Aorta (tissue), 5 donors: ENCODE measurements at regions of chr11 and their contacts with region 1.

Region 1: GRCh38 chr11:14974515-14975251 is 2.5 kb upstream of the CALCA start:
- DNase-seq: peak; percentile 62 to 81
- ATAC-seq: no peak
- H3K4me3 ChIP-seq: peak overlapping the region; percentile 10 to 16
- H3K27ac ChIP-seq: no peak overlapping the region
- H3K4me1 ChIP-seq: no peaks in the 10 kb centered on the region
- H3K27me3 ChIP-seq: peaks cover 0 to 1% of the 10 kb centered on the region in 2 donors

Region 2: GRCh38 chr11:15027011-15027410 is 52.3 kb after region 1 on chr11:
- intact Hi-C with region 1: loop called in 1 of 2 experiments (anchors 10 kb)
- DNase-seq: no peak
- ATAC-seq: no peak
- H3K4me3 ChIP-seq: no peak overlapping the region
- H3K27ac ChIP-seq: no peak overlapping the region
- H3K4me1 ChIP-seq: no peaks in the 10 kb centered on the region
- H3K27me3 ChIP-seq: no peaks in the 10 kb centered on the region

Region 3: GRCh38 chr11:15074206-15075161 is 99.8 kb after region 1 on chr11:
- intact Hi-C with region 1: loop called (anchors 2 kb)
- DNase-seq: peak; percentile 88 to 96
- ATAC-seq: peak; percentile 83
- H3K4me3 ChIP-seq: no peak overlapping the region
- H3K27ac ChIP-seq: no peak overlapping the region
- H3K4me1 ChIP-seq: no peaks in the 10 kb centered on the region
- H3K27me3 ChIP-seq: no peaks in the 10 kb centered on the region

Region 4: GRCh38 chr11:15199693-15200092 is 225.0 kb after region 1 on chr11:
- intact Hi-C with region 1: loop called (anchors 5 to 10 kb)
- DNase-seq: peak; percentile 75 to 84
- ATAC-seq: peak; percentile 51
- H3K4me3 ChIP-seq: no peak overlapping the region
- H3K27ac ChIP-seq: peak overlapping the region in 1 of 2 donors; percentile 39
- H3K4me1 ChIP-seq: peaks cover 0 to 25% of the 10 kb centered on the region in 2 donors
- H3K27me3 ChIP-seq: no peaks in the 10 kb centered on the region

Region 5: DNA sequence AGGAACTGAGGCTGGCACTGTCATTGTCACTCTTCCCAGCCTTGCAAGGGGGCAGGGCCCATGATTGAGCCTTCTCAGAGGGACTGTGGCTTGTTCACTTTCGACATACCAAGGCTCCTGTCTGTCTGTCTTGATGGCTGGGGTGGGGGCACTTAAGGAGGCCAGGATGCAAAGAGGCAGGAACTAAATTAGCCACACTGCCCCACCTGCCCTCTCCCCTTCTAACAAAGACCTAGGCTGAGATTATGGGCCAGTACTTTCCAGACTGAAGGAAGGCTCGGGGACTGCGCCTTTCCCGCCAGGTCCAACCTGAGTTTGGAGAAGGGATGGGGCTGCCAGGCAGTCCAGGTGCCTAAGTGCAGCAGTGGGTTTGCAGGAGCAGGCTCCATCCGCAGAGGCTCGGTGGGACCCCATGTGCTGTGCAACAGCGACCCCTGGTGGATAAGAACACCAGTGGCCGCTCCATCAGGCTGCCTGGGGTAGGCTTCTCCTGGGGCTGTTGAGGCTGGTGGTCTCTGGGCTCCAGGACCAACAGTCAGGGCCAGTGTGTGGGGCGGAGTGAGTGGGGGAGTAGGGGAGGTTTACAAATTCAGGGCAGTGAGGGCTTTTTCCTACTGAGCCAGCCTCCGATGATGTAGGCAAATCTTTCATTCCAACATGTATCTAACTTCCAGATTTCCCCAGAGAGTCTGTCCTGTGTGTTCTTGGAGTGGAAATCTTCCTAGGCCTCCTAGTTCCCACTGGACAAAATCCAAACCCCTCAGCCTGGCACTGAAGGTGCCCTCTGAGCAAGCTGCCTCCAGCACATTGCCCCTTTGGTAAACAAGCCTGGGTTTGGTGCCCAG is 233.9 kb after region 1 on chr11:
- intact Hi-C with region 1: loop called (anchors 5 to 10 kb)
- DNase-seq: peak; percentile 77 to 89
- ATAC-seq: peak; percentile 91
- H3K4me3 ChIP-seq: no peak overlapping the region
- H3K27ac ChIP-seq: no peak overlapping the region
- H3K4me1 ChIP-seq: no peaks in the 10 kb centered on the region
- H3K27me3 ChIP-seq: no peaks in the 10 kb centered on the region